Calu3 (cell line): ENCODE measurements at regions of chr12 and their contacts with region 1.

Region 1: GRCh38 chr12:55619354-55620138 is 17.1 kb upstream of the OR10P1 start:
- DNase-seq: peak; percentile 82
- H3K4me3 Mint-ChIP-seq: no peak overlapping the region
- H3K27ac Mint-ChIP-seq: no peak overlapping the region
- H3K4me1 Mint-ChIP-seq: no peaks in the 10 kb centered on the region
- H3K27me3 Mint-ChIP-seq: peaks cover 18% of the 10 kb centered on the region
- CTCF ChIP-seq: peak; percentile 86

Region 2: DNA sequence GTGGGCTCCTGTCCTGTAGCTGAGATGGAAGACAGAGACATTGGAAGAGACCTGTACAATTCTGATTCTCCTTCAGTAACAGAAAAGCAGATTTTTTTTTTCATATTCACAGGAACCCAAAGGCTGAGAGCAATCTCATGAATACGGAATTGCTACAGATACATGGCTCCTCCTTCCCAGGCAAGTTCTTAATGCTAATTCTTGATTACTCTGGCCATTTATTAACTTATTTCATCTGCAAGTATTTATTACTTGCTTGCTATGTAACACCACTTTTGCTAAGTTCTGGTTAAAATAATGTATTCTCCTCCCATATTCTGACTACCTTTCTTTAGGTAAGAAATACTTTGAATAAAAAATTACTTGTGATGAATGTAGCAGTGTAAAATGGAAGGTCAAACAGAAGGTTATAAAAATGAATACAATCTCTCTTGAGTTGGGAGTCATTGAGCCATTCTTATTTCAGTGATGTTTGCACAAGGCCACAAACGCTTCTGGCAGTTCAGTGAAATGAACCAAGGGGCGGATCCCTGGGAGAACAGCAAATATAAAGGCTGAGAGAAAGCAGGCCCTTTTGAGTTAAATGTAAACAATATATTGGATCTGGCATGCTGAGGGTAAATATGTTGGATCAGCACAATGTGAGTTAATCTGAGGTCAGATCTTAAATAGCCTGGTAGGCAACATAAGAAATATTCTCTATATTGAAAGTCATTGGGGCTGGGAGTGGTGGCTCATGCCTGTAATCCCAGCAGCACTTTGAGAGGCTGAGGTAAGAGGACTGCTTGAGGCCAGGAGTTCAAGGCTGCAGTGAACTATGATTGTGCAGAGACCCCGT is 727.6 kb before region 1 on chr12:
- CTCF ChIA-PET with region 1: no interaction called
- intact Hi-C with region 1: no loop called
- DNase-seq: peak; percentile 57
- H3K4me3 Mint-ChIP-seq: no peak overlapping the region
- H3K27ac Mint-ChIP-seq: no peak overlapping the region
- H3K4me1 Mint-ChIP-seq: peaks cover 10% of the 10 kb centered on the region
- H3K27me3 Mint-ChIP-seq: peaks cover 25% of the 10 kb centered on the region
- CTCF ChIP-seq: no peak

Region 3: DNA sequence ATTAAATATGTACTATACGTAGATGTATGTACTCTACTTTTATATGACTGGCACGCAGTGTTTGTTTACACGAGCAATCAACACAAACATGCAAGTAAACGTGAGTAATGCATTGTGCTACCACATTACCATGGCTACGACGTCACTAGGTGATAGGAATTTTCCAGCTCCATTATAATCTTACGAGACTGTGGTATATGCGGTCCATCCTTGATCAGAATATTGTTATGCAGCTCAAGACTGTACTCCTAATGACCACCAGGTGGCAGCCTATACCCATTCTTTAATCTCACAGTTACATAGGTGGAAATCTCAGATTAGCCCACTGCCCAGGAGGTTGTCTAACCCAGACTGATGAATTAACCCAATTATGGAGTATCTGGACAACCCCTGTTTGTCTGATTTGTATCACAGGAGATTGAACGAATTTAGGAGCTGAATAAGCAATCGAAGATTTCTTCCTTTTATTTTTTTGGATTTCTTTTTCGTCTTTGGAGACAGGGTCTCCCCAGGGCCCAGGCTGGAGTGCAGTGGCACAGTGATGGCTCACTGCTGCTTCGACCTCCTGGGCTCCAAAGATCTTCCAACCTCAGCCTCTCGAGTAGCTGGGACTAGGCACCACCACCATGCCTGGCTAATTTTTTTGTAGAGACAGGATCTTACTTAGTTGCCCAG is 626.2 kb before region 1 on chr12:
- CTCF ChIA-PET with region 1: no interaction called
- intact Hi-C with region 1: loop called (anchors 10 kb)
- DNase-seq: peak; percentile 60
- H3K4me3 Mint-ChIP-seq: no peak overlapping the region
- H3K27ac Mint-ChIP-seq: no peak overlapping the region
- H3K4me1 Mint-ChIP-seq: no peaks in the 10 kb centered on the region
- H3K27me3 Mint-ChIP-seq: peaks cover 67% of the 10 kb centered on the region
- CTCF ChIP-seq: peak; percentile 75

Region 4: GRCh38 chr12:55188974-55189556 is 430.5 kb before region 1 on chr12:
- CTCF ChIA-PET with region 1: interaction called, 15 read pairs
- intact Hi-C with region 1: loop called (anchors 1 kb)
- DNase-seq: peak; percentile 71
- H3K4me3 Mint-ChIP-seq: no peak overlapping the region
- H3K27ac Mint-ChIP-seq: no peak overlapping the region
- H3K4me1 Mint-ChIP-seq: no peaks in the 10 kb centered on the region
- H3K27me3 Mint-ChIP-seq: peaks cover 8% of the 10 kb centered on the region
- CTCF ChIP-seq: peak; percentile 56

Region 5: DNA sequence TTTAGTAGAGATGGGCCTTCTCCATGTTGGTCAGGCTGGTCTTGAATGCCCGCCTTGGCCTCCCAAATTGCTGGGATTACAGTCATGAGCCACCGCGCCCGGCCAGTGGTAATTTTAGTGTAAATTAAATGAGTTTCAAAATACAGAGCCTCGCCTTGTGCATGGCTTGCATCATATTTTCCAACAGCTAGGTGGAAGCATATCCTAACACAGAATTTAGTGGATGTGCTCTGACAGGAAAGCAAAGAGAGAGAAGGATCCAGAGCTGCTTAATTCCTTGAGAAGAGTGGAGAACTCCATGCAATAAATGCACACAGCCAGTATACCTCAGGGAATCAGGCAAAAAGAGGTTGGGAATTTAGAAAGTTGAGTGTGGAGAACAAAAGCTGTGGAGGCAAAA is 173.2 kb before region 1 on chr12:
- CTCF ChIA-PET with region 1: no interaction called
- intact Hi-C with region 1: loop called (anchors 1 kb)
- DNase-seq: no peak
- H3K4me3 Mint-ChIP-seq: no peak overlapping the region
- H3K27ac Mint-ChIP-seq: no peak overlapping the region
- H3K4me1 Mint-ChIP-seq: no peaks in the 10 kb centered on the region
- H3K27me3 Mint-ChIP-seq: no peaks in the 10 kb centered on the region
- CTCF ChIP-seq: no peak

Region 6: GRCh38 chr12:55515696-55516095 is 103.8 kb before region 1 on chr12:
- CTCF ChIA-PET with region 1: no interaction called
- intact Hi-C with region 1: no loop called
- DNase-seq: no peak
- H3K4me3 Mint-ChIP-seq: no peak overlapping the region
- H3K27ac Mint-ChIP-seq: no peak overlapping the region
- H3K4me1 Mint-ChIP-seq: no peaks in the 10 kb centered on the region
- H3K27me3 Mint-ChIP-seq: no peaks in the 10 kb centered on the region
- CTCF ChIP-seq: no peak